Posterior cingulate gyrus (tissue), 11 donors: ENCODE measurements at regions of chr7 and their contacts with region 1.

Region 1: DNA sequence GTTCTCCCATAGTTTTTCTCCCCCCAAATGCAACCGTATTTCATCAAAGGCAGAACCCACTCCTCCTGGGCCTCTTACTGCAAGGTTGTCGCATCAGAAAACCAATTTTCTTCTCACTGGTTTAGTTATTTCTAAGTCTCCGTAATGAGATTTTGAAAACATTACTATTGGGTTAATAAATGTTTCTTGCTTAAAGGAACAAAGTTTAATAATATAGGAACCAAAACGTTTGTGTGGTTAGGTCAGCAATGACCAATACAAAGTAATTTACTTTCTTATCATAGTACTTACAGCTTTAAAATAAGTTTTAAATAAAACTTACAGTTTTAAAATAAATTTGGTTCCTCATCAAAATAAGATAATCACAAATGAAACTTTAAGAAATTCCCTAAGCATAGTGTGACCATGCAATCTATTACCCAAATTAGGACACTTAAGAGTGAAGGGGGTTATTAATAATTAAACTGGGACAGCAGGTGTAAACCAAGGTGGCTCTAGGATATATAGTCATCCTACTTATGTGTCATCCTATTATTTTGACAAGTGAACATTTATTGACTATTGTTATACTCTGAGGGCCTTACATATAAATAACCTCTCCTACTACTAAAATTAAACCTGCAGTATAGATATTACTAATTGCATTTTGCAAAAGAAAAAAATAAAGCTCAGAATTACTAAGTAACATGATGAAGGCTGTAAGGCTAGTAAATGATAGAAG is 415.4 kb upstream of the LRRN3 start:
- DNase-seq: no peak

Region 2: DNA sequence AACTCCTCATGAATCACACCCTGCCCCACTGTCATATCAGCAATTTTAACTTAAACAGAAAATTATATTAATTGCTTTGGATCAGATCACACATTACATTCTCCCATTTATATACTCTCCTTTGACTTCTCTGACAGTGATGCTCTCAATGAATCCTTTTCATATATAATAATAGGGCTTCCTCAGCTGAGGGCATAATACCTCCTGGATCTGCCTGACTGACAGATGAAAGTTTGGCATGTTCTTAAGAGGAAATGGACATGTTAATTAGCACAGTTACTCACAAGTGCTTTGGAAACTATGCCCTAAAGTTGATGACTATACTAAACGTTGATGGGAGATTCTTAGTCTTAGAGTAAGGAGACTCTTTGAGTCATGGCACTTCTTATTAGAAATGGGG is 62.9 kb before region 1 on chr7:
- intact Hi-C with region 1: loop called (anchors 10 kb)
- DNase-seq: no peak